Ascending aorta (tissue), 2 donors: ENCODE measurements at regions of chr14 and their contacts with region 1.

Region 1: GRCh38 chr14:20682435-20683124 is 1.8 kb upstream of the RNASE4 start:
- DNase-seq: peak; percentile 80 to 95
- H3K4me3 ChIP-seq: peak overlapping the region; percentile 89 to 94
- H3K27ac ChIP-seq: peak overlapping the region; percentile 100
- H3K4me1 ChIP-seq: peaks cover 13 to 35% of the 10 kb centered on the region in 2 donors
- H3K27me3 ChIP-seq: no peaks in the 10 kb centered on the region
- CTCF ChIP-seq: peak in 2 of 3 experiments; percentile 9 to 37

Region 2: GRCh38 chr14:20343092-20343861 is 339.3 kb before region 1 on chr14 and contains the start of gene PARP2:
- intact Hi-C with region 1: loop called (anchors 2 kb)
- DNase-seq: peak; percentile 90 to 99
- H3K4me3 ChIP-seq: peak within 1 kb of the TSS; percentile 60 to 77
- H3K27ac ChIP-seq: peak within 1 kb of the TSS; percentile 87 to 89
- H3K4me1 ChIP-seq: peaks cover 4 to 9% of the 10 kb centered on the region in 2 donors
- H3K27me3 ChIP-seq: no peaks in the 10 kb centered on the region
- CTCF ChIP-seq: no peak
- total RNA-seq, gene PARP2: 0.32 TPM

Region 3: DNA sequence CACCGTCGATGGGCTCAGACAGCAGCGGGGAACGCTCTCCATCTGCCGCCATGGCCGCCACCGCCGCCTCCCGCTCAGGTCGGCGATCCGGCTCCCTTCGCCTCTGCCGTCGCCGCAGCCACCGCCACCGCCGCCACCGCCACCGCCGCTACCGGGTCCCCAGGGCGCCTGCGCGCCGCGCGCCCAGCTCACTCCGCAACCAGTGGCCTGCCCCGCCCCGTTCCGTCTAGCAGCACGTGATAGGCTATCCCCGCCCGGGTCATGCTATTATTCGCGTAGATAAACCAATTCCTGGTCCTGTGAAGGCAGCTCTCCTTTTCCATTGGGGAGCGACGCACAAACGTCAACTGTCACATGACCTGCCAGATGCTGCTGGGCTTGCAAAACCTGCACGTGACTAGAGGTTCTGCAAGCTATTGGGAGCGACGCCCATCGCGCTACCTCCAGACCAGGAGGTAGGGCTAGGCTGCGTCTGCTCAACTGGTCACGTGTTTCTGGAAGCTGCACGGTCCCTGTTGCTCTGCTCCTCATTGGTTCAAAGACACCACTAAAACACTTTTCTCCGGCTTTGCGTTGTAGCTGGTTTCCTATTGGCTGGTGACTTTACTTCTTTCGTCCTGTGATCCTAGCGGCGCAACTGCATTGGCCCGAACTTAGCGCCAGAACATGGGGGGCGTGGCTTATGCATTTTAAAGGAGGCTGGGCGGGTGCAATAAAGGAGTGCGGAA is 221.1 kb before region 1 on chr14 and contains the start of gene PIP4P1:
- intact Hi-C with region 1: loop called (anchors 1 kb)
- DNase-seq: peak; percentile 100
- H3K4me3 ChIP-seq: peak within 1 kb of the TSS; percentile 89 to 98
- H3K27ac ChIP-seq: peak within 1 kb of the TSS; percentile 91 to 92
- H3K4me1 ChIP-seq: peaks cover 7 to 14% of the 10 kb centered on the region in 2 donors
- H3K27me3 ChIP-seq: no peaks in the 10 kb centered on the region
- CTCF ChIP-seq: no peak
- total RNA-seq, gene PIP4P1: 30.7 TPM

Region 4: GRCh38 chr14:20970983-20971704 is 288.6 kb after region 1 on chr14:
- intact Hi-C with region 1: loop called (anchors 2 kb)
- DNase-seq: peak; percentile 39 to 90
- H3K4me3 ChIP-seq: peak overlapping the region; percentile 58 to 75
- H3K27ac ChIP-seq: peak overlapping the region; percentile 80 to 85
- H3K4me1 ChIP-seq: peaks cover 0 to 5% of the 10 kb centered on the region in 2 donors
- H3K27me3 ChIP-seq: no peaks in the 10 kb centered on the region
- CTCF ChIP-seq: peak; percentile 86 to 93 (median 88)

Region 5: DNA sequence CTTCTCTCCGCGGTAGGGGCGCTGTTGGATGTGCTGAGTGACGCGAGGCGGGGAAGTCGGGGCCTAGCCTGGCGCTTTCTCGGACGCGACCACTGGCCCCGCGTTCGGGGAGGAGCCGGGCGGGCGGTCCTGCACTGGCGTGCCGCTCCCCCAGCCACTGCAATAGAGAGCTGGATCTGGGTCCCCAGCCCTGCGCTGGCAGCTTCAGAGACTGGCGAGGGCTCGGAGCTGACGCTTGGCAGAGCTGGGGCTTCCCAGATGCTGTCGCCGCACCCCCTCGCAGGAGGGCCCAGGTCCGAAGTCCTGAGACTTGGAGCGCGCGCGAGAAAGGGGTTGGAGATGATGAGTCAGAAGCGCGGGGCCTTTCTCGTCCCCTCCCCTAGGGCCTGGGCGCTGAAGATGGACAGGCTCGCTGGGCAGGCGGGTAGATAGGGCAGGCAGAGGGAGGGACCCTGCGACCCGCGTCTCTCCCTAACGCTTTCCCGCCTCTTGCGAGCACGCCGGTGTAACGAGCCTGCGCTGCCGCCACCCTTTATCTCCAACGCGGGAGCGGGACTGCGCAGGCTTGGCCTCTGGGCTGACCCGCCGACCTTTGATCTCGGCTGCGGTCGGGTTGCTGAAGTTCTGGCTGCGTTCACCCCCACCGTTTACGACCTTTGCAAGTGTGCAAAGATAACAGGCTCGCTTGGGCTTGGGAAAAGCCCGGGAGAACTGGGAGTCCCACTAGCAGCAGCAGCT is 421.3 kb after region 1 on chr14:
- intact Hi-C with region 1: loop called (anchors 5 kb)
- DNase-seq: peak; percentile 87 to 98
- H3K4me3 ChIP-seq: peak overlapping the region; percentile 67 to 73
- H3K27ac ChIP-seq: peak overlapping the region; percentile 97
- H3K4me1 ChIP-seq: peaks cover 3 to 22% of the 10 kb centered on the region in 2 donors
- H3K27me3 ChIP-seq: no peaks in the 10 kb centered on the region
- CTCF ChIP-seq: peak in 2 of 3 experiments; percentile 81 to 88

Region 6: DNA sequence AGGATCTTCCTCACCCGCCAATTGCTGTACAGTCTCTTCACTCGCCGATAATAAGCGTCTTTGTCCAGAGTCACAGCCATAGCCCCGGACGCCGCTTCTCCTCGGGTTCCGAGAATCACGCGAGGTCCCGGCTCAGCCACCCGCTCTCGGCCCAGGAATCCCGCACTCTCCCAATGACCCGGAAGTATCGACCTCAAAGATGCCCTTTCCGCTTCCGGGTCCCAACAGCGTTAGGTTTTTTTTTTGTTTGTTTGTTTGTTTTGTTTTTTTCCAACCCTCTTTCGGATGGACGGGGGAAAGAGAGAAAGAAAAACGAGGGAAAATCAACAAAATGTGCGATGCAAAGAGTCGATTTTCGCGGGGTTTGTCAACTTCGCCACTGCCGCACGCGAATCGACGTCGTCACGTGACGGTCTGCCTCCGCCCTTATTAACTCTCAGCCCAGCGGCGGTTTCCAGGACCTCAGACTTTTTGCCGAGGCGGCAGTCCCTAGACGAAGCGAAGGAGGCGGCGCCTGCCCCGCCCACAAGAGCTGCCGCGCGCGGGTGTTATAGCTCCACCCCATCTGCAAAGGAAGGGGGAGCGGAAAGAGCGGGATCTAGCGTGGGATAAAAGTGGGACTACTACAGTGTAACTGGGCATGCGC is 701.4 kb after region 1 on chr14 and contains the start of gene SUPT16H:
- intact Hi-C with region 1: loop called (anchors 5 kb)
- DNase-seq: peak; percentile 89 to 98
- H3K4me3 ChIP-seq: peak within 1 kb of the TSS; percentile 63 to 79
- H3K27ac ChIP-seq: peak within 1 kb of the TSS; percentile 88 to 90
- H3K4me1 ChIP-seq: peaks cover 0 to 16% of the 10 kb centered on the region in 2 donors
- H3K27me3 ChIP-seq: no peaks in the 10 kb centered on the region
- CTCF ChIP-seq: no peak
- total RNA-seq, gene SUPT16H: 13.5 TPM